Activated T-helper 2 cell treated with anti-CD3 and anti-CD28 coated beads, Interferon-gamma antibody, Interleukin-2, Interleukin-4, amounts not matched to agents 10 μg/mL and 5 μg/mL and 100 μg/mL, durations not matched to agents 14 hours and 24 hours and 36 hours (primary cell): ENCODE measurements at regions of chr2 and their contacts with region 1.

Region 1: GRCh38 chr2:193810533-193810932 is 1615.8 kb upstream of the TMEFF2 start:
- DNase-seq: no peak
- H3K4me3 Mint-ChIP-seq: no peak overlapping the region
- H3K27ac Mint-ChIP-seq: no peak overlapping the region
- H3K4me1 Mint-ChIP-seq: no peaks in the 10 kb centered on the region
- H3K27me3 Mint-ChIP-seq: no peaks in the 10 kb centered on the region

Region 2: DNA sequence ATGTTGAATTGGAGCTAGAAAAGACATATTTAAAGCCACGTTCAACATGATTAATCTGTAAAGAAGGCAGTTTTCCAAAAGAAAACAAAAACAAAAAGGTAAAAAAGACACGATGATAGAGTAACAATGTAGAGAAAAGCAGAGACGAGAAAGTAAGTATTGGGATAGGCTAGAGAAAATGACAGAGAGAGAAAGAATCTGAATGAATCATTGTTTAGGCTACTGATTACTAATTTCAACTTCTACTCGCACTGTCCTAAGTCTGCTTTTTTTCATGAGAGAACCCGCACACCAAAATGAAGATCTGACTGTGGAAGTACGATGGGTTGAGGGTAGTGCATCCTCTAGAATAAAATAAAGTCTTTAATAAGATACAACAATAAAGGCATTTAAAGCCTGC is 16.6 kb before region 1 on chr2:
- intact Hi-C with region 1: no loop called
- DNase-seq: no peak
- H3K4me3 Mint-ChIP-seq: no peak overlapping the region
- H3K27ac Mint-ChIP-seq: no peak overlapping the region
- H3K4me1 Mint-ChIP-seq: no peaks in the 10 kb centered on the region
- H3K27me3 Mint-ChIP-seq: no peaks in the 10 kb centered on the region

Region 3: DNA sequence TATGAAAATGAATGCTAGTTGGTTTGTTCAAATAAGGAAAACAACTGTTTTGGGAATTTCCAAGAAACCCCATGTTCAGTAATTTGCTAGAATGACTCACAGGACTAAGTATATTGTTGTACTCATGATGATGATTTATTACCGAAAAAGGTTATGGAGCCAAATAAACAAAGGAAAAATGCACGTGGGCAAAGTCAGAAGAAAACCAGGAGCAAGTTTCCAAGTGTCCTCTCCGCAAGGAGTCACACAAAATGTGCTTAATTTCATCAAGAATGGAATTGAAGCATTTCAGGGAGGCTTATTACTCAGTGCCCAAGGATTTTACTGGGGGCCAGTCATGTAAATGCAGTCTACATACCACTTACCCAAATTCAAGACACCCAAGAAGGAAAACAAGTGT is 36.6 kb after region 1 on chr2:
- intact Hi-C with region 1: loop called (anchors 5 kb)
- DNase-seq: no peak
- H3K4me3 Mint-ChIP-seq: no peak overlapping the region
- H3K27ac Mint-ChIP-seq: no peak overlapping the region
- H3K4me1 Mint-ChIP-seq: no peaks in the 10 kb centered on the region
- H3K27me3 Mint-ChIP-seq: no peaks in the 10 kb centered on the region

Region 4: DNA sequence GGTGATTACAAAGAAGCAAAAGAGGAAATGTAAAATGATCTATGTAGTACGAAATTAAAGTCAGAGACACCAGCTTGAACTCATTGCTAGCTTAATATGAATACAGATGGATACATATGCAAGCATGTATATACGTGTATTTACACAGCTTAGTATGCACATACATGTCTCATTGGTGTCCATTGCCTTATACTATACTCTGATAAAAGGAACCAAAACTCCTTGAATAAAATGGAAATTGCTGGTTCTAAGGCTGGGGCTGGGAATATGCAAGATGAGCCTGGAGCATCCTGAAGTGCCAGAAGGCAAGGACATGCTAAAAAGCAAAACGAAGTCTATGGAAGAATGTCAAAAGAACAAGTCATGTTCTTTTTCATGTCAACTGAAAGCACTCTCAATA is 422.1 kb after region 1 on chr2:
- intact Hi-C with region 1: no loop called
- DNase-seq: no peak
- H3K4me3 Mint-ChIP-seq: no peak overlapping the region
- H3K27ac Mint-ChIP-seq: no peak overlapping the region
- H3K4me1 Mint-ChIP-seq: no peaks in the 10 kb centered on the region
- H3K27me3 Mint-ChIP-seq: no peaks in the 10 kb centered on the region